ENCODE measurements at regions of chr5 and their contacts with region 1.

Region 1: GRCh38 chr5:131109540-131110255 is 55.4 kb downstream of the HINT1 start:
- DNase-seq: peak; percentile 10
- H3K4me3 ChIP-seq: no peak overlapping the region
- H3K27ac ChIP-seq: no peak overlapping the region
- H3K4me1 ChIP-seq: no peaks in the 10 kb centered on the region
- H3K27me3 ChIP-seq: no peaks in the 10 kb centered on the region
- CTCF ChIP-seq: peak; percentile 14 to 74 (median 68)
- POLR2A ChIP-seq: no peak

Region 2: DNA sequence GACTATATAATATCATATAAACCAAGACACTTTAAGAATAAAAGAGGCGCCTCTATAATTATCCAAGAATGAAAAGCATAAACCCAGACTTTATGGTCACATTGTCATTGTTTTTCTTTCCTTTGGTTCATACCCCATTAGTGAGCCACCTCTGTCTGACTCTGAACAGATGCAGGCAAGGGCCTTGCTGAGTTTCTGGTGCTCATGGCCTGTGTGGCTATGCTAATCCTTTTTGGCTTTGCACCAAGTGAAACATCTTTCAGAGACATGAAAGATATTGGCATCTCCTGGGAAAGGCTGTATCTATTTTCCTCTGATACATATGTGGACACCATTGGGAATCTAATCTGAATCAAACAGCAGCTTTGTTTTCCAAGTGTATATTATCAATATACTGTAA is 983.0 kb before region 1 on chr5:
- intact Hi-C with region 1: loop called (anchors 10 kb)
- DNase-seq: no peak
- H3K4me3 ChIP-seq: no peak overlapping the region
- H3K27ac ChIP-seq: no peak overlapping the region
- H3K4me1 ChIP-seq: no peaks in the 10 kb centered on the region
- H3K27me3 ChIP-seq: no peaks in the 10 kb centered on the region
- CTCF ChIP-seq: no peak
- POLR2A ChIP-seq: no peak

Region 3: DNA sequence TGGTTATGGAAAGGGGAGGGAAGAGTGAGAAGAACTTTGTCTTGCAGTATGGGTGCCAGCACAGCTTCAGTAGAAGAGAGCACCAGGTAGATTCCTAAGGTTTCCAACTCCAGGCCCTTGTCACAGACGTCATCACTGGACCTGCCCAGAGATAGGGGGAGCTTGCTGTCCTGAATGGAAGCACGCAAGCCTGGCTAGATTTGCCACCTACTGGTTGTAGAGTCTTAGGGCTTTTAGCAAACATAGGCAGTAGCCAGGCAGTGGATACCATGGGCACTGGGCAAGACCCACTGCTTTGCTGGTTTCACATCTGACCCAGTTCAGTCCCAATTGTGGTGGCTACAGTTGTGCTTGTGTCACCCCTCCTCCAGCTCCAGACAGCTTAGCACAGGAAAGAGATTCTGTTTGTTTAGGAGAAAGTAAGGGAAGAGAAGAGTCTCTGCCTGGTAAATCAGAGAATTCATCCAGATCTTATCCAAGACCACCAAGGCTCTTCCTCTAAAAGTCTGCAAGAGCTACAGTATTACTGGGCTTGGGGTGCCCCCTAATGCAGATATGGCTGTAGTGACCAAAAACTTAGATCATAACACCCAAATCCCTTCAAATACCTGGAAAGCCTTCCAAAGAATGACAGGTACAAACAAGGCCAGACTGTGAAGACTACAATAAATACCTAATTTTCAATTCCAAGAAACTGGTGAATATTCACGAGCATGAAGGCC is 103.6 kb before region 1 on chr5:
- intact Hi-C with region 1: no loop called
- DNase-seq: no peak
- H3K4me3 ChIP-seq: no peak overlapping the region
- H3K27ac ChIP-seq: no peak overlapping the region
- H3K4me1 ChIP-seq: no peaks in the 10 kb centered on the region
- H3K27me3 ChIP-seq: no peaks in the 10 kb centered on the region
- CTCF ChIP-seq: no peak
- POLR2A ChIP-seq: no peak